ENCODE measurements at regions of chr15 and their contacts with region 1.

Region 1: GRCh38 chr15:38690689-38691332 is 126.2 kb upstream of the RASGRP1 start:
- DNase-seq: peak; percentile 32
- H3K4me3 ChIP-seq: no peak overlapping the region
- H3K27ac ChIP-seq: no peak overlapping the region
- H3K4me1 ChIP-seq: peaks cover 0 to 22% of the 10 kb centered on the region in 2 experiments; a peak in 2 of 4 replicates
- H3K27me3 ChIP-seq: no peaks in the 10 kb centered on the region
- CTCF ChIP-seq: peak; percentile 86
- EP300 ChIP-seq: no peak
- RAD21 ChIP-seq: peak; percentile 70

Region 2: DNA sequence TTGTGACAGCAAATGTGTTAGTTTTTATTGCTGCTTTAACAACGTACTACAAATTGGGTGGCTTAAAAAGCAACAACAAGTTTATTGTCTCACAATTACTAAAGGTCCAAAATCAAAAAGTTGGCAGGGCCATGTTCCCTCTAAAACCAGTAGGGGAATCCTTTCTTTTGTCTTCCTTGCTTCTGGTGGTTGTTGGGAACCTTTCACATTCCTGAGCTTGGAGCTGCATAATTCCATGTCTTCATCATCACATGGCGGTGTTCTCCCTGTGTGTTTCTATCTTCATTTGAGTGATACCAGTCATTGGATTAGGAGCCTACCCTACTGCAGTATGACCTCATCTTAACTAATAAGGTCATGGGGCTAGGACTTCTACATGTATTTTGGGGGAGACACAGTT is 430.7 kb before region 1 on chr15:
- CTCF ChIA-PET with region 1: no interaction called
- POLR2A ChIA-PET with region 1: no interaction called
- DNase-seq: no peak
- H3K4me3 ChIP-seq: no peak overlapping the region
- H3K27ac ChIP-seq: no peak overlapping the region
- H3K4me1 ChIP-seq: peaks cover 18 to 25% of the 10 kb centered on the region in 2 experiments; a peak in 2 of 4 replicates
- H3K27me3 ChIP-seq: no peaks in the 10 kb centered on the region
- CTCF ChIP-seq: no peak; the same call in 1 of the 2 replicates
- EP300 ChIP-seq: no peak
- RAD21 ChIP-seq: no peak

Region 3: GRCh38 chr15:38474155-38474757 is 216.6 kb before region 1 on chr15:
- CTCF ChIA-PET with region 1: interaction called, 29 read pairs
- POLR2A ChIA-PET with region 1: no interaction called
- DNase-seq: peak; percentile 62
- H3K4me3 ChIP-seq: no peak overlapping the region
- H3K27ac ChIP-seq: no peak overlapping the region
- H3K4me1 ChIP-seq: no peaks in the 10 kb centered on the region; a peak in 2 of 4 replicates
- H3K27me3 ChIP-seq: no peaks in the 10 kb centered on the region
- CTCF ChIP-seq: peak; percentile 81
- EP300 ChIP-seq: no peak
- RAD21 ChIP-seq: peak; percentile 97

Region 4: DNA sequence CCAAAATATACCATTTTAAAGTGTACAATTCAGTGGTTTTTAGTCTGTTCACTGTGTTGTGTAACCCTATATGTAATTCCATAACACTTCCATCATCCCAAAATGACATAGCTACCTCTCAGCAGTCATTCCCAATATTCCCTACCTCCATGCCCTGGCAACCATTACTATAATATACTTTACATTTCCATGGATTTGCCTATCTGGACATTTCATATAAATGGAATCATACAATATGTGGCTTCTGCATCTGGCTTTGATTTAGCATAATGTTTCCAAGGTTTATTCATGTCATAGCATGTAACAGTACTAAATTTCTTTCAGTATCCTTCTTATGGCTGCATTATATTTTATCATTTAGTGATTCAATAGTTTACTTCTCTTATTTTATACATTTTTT is 211.5 kb before region 1 on chr15:
- CTCF ChIA-PET with region 1: interaction called, 29 read pairs
- POLR2A ChIA-PET with region 1: no interaction called
- DNase-seq: no peak
- H3K4me3 ChIP-seq: no peak overlapping the region; a peak in 1 of 4 replicates
- H3K27ac ChIP-seq: peak overlapping the region in 1 of 2 experiments; percentile 66; a peak in 2 of 4 replicates
- H3K4me1 ChIP-seq: peaks cover 0 to 9% of the 10 kb centered on the region in 2 experiments; a peak in 3 of 4 replicates
- H3K27me3 ChIP-seq: no peaks in the 10 kb centered on the region
- CTCF ChIP-seq: no peak
- EP300 ChIP-seq: no peak
- RAD21 ChIP-seq: no peak

Region 5: GRCh38 chr15:38647683-38648082 is 43.1 kb before region 1 on chr15:
- CTCF ChIA-PET with region 1: interaction called, 12 read pairs
- POLR2A ChIA-PET with region 1: no interaction called
- DNase-seq: no peak
- H3K4me3 ChIP-seq: no peak overlapping the region
- H3K27ac ChIP-seq: no peak overlapping the region
- H3K4me1 ChIP-seq: no peaks in the 10 kb centered on the region
- H3K27me3 ChIP-seq: peaks cover 6% of the 10 kb centered on the region; the same call in 1 of the 2 replicates
- CTCF ChIP-seq: peak; percentile 45
- EP300 ChIP-seq: no peak
- RAD21 ChIP-seq: peak; percentile 37

Region 6: GRCh38 chr15:38674448-38674847 is 16.4 kb before region 1 on chr15:
- CTCF ChIA-PET with region 1: interaction called, 11 read pairs
- POLR2A ChIA-PET with region 1: no interaction called
- DNase-seq: no peak
- H3K4me3 ChIP-seq: no peak overlapping the region
- H3K27ac ChIP-seq: no peak overlapping the region
- H3K4me1 ChIP-seq: no peaks in the 10 kb centered on the region
- H3K27me3 ChIP-seq: no peaks in the 10 kb centered on the region; the same call in 1 of the 2 replicates
- CTCF ChIP-seq: no peak
- EP300 ChIP-seq: no peak
- RAD21 ChIP-seq: no peak

Region 7: DNA sequence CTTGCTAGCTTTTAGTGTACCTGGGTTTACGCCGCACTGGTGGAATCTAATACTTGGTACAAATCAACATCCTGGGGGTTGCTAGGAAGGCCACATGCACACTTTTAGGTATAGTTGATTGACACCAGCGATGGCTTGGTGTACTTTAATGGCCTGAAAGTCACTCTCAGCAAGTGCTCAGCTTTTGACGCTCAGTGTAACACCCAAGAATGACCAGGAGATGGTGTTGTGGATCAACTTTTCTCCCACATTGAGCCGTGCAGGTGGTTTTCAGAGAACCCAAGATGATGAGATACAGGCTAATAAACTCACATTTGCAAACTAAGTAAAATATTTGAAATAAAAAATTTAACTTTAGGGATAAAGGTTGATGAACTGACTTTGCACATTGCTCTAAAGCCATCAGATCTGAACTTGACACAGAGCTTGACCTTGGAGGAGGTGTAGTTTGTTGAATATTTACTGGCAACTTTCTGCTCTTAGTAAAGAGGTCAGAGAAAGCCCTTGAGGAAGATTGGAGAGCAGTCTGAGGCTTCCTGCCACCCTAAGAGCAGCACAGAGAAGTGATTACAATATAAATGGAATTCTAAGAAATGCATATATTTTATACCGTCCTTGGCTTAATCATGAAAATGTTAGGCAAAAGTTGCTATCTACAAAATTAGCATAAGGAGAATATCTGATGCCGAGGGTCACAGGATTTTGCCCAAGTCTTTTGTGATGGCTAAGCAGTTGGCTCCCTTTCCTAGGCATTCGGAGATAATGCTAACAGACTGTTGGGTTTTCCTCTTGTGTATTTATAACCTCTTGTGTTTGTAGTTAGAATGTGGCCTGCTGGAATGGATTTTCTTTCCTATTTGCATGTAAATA is 17.2 kb after region 1 on chr15:
- CTCF ChIA-PET with region 1: interaction called, 56 read pairs
- POLR2A ChIA-PET with region 1: no interaction called
- DNase-seq: peak; percentile 44
- H3K4me3 ChIP-seq: no peak overlapping the region
- H3K27ac ChIP-seq: peak overlapping the region; percentile 18 to 36; a peak in 1 of 4 replicates
- H3K4me1 ChIP-seq: no peaks in the 10 kb centered on the region; a peak in 2 of 4 replicates
- H3K27me3 ChIP-seq: no peaks in the 10 kb centered on the region
- CTCF ChIP-seq: peak; percentile 85
- EP300 ChIP-seq: no peak
- RAD21 ChIP-seq: peak; percentile 98

Region 8: DNA sequence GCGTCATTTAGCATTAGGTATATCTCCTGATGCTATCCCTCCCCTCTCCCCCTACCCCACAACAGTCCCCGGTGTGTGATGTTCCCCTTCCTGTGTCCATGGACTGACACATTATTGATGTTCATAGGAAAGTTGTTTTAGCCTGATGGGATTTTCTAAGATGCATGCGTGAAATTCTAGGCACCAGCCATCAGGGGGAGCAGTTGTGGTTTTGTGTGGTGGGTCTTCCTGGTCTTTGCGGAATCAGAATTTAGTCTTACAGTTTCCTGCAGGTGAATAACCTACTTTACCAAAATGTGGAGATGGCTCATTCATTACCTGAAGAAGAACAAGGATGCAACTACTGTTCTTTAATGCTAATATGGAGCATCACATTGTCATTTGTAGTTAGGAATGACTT is 435.1 kb after region 1 on chr15:
- CTCF ChIA-PET with region 1: no interaction called
- POLR2A ChIA-PET with region 1: no interaction called
- DNase-seq: peak; percentile 51
- H3K4me3 ChIP-seq: no peak overlapping the region; a peak in 1 of 4 replicates
- H3K27ac ChIP-seq: peak overlapping the region in 1 of 2 experiments; percentile 79; a peak in 2 of 4 replicates
- H3K4me1 ChIP-seq: peaks cover 3 to 37% of the 10 kb centered on the region in 2 experiments
- H3K27me3 ChIP-seq: no peaks in the 10 kb centered on the region
- CTCF ChIP-seq: peak; percentile 76
- EP300 ChIP-seq: no peak
- RAD21 ChIP-seq: peak; percentile 72